Panc1 (cell line): ENCODE measurements at regions of chr17 and their contacts with region 1.

Region 1: DNA sequence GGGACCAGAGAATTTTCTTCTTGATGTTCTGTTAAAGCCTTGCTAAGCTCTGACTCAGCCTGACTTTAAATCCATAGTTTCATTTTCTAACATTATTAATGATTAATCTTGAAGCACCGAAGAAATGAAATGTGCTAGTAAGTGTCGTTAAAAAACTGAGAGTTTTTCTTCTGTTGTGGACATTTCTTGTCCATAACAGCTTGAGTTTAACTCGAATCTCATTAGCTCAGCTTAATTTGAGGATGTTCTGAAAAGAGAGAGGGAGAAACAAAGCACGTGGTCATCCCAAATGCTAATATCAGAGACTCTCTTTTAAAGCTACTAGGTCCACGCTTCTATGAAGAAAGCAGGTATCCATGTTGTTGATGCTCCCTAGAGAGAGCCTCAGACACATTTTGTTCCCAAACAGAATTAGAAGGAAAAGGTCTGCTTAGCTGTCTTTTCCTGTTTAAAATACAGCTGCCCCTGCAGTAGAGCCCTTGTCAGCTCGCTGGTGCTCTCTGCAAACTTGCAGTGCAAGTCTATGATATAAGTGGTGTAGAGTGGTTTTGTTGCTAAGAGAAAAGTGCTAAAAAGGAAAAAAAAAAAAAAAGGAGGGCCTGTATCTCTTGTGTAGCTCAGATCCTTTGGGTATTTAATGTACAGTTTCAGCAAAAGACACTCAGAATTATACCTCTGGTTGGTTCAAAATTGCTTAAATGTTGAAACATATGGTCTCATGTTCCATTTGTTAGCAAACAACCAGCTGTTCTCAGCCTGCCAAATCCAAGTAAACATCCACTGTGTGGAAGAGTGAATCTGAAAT is 191.1 kb upstream of the TBX2 start:
- DNase-seq: no peak
- ATAC-seq: no peak
- H3K4me3 ChIP-seq: no peak overlapping the region
- H3K27ac ChIP-seq: peak overlapping the region; percentile 73
- H3K4me1 ChIP-seq: peaks cover 27% of the 10 kb centered on the region
- H3K27me3 ChIP-seq: no peaks in the 10 kb centered on the region
- CTCF ChIP-seq: no peak

Region 2: DNA sequence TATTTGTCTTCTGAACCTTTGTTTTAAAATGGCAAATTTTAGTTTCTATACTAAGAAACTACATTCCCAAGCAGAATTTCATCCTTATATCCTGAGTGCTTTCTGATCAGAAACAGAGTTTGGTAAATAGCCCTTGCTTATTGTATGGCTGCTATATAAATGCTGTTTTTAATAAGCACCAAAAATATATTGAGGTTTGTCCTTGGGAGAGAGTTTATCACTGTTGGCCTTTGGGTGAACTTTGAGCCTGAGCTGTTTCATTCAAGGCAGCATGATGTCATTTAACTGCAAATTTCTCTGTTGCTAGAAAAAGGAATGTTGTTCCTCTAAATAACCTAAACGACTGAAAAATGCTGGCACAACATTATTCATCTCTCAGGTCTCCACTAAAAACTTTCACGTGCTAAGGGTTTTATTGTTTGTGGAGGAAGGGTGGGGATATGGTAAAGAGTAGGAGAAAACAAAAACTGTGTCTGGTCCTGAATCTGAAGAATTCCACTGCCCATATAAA is 143.2 kb before region 1 on chr17:
- CTCF ChIA-PET with region 1: no interaction called
- POLR2A ChIA-PET with region 1: no interaction called
- in situ Hi-C with region 1: no loop called
- intact Hi-C with region 1: no loop called
- DNase-seq: no peak
- ATAC-seq: 0 out of 2 replicates have a peak, but pooled peaks have one; percentile 30
- H3K4me3 ChIP-seq: no peak overlapping the region
- H3K27ac ChIP-seq: peak overlapping the region; percentile 65; the same call in 1 of the 2 replicates
- H3K4me1 ChIP-seq: peaks cover 15% of the 10 kb centered on the region; the same call in 1 of the 2 replicates
- H3K27me3 ChIP-seq: no peaks in the 10 kb centered on the region
- CTCF ChIP-seq: no peak

Region 3: GRCh38 chr17:61221597-61222460 is 13.3 kb after region 1 on chr17:
- CTCF ChIA-PET with region 1: no interaction called
- POLR2A ChIA-PET with region 1: interaction called, 11 read pairs
- in situ Hi-C with region 1: no loop called
- intact Hi-C with region 1: no loop called
- DNase-seq: no peak
- ATAC-seq: no peak
- H3K4me3 ChIP-seq: no peak overlapping the region
- H3K27ac ChIP-seq: peak overlapping the region; percentile 20; the same call in 1 of the 2 replicates
- H3K4me1 ChIP-seq: peaks cover 9% of the 10 kb centered on the region; the same call in 1 of the 2 replicates
- H3K27me3 ChIP-seq: no peaks in the 10 kb centered on the region
- CTCF ChIP-seq: no peak